ENCODE measurements at regions of chr12 and their contacts with region 1.

Region 1: GRCh38 chr12:8065991-8066594 is at the start of gene C3AR1:
- DNase-seq: peak; percentile 83
- H3K4me3 ChIP-seq: peak within 1 kb of the TSS in 1 of 3 experiments; percentile 38
- H3K27ac ChIP-seq: peak within 1 kb of the TSS; percentile 48
- H3K4me1 ChIP-seq: peaks cover 15% of the 10 kb centered on the region
- H3K27me3 ChIP-seq: no peaks in the 10 kb centered on the region
- CTCF ChIP-seq: no peak
- POLR2A ChIP-seq: no peak
- total RNA-seq, gene C3AR1: 0.21 and 0.22 TPM in 2 replicates

Region 2: GRCh38 chr12:8032242-8033152 is 33.6 kb before region 1 on chr12 and contains the start of gene FOXJ2:
- CTCF ChIA-PET with region 1: interaction called, 3 read pairs
- POLR2A ChIA-PET with region 1: no interaction called
- dilution Hi-C with region 1: no loop called
- intact Hi-C with region 1: loop called (anchors 2 kb)
- DNase-seq: peak; percentile 80
- H3K4me3 ChIP-seq: peak within 1 kb of the TSS; percentile 72 to 96 (median 82)
- H3K27ac ChIP-seq: peak within 1 kb of the TSS; percentile 90
- H3K4me1 ChIP-seq: peaks cover 33% of the 10 kb centered on the region
- H3K27me3 ChIP-seq: no peaks in the 10 kb centered on the region
- CTCF ChIP-seq: no peak
- POLR2A ChIP-seq: no peak
- total RNA-seq, gene FOXJ2: 13.3 and 13.9 TPM in 2 replicates

Region 3: GRCh38 chr12:8045952-8046944 is 19.8 kb before region 1 on chr12:
- CTCF ChIA-PET with region 1: interaction called, 13 read pairs
- POLR2A ChIA-PET with region 1: no interaction called
- dilution Hi-C with region 1: no loop called
- intact Hi-C with region 1: loop called (anchors 2 kb)
- DNase-seq: peak; percentile 81
- H3K4me3 ChIP-seq: no peak overlapping the region
- H3K27ac ChIP-seq: no peak overlapping the region
- H3K4me1 ChIP-seq: no peaks in the 10 kb centered on the region
- H3K27me3 ChIP-seq: no peaks in the 10 kb centered on the region
- CTCF ChIP-seq: peak; percentile 83 to 85
- POLR2A ChIP-seq: no peak

Region 4: DNA sequence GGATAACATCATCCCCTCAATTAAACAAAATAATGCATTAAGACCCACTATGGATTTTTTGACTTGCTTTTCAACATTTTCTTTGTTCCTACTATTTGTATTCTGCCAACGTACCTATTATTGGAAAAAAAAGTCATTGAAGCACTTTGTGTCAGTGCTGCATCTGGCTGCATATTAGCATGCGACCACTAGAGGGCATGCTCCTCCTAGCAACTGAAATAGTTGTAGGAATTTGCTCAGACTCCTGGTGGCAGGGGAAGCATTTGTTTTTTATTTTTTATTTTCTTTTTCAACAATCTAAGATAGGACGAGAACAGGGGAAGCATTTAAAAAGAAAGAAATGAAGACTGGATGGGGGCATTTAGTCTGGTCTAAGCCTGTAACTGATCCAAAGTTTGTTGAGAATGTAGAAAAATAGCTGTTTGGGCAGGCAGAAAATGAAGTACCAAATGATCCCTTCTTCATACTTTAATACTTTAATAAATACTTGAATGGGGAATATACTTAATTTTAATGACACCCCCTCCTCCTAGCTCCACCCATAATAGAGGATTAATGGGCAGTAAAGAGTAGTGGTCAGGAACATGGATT is 42.8 kb after region 1 on chr12:
- CTCF ChIA-PET with region 1: no interaction called
- POLR2A ChIA-PET with region 1: no interaction called
- dilution Hi-C with region 1: no loop called
- intact Hi-C with region 1: no loop called
- DNase-seq: peak; percentile 85
- H3K4me3 ChIP-seq: no peak overlapping the region
- H3K27ac ChIP-seq: no peak overlapping the region
- H3K4me1 ChIP-seq: no peaks in the 10 kb centered on the region
- H3K27me3 ChIP-seq: no peaks in the 10 kb centered on the region
- CTCF ChIP-seq: peak; percentile 80 to 94
- POLR2A ChIP-seq: no peak

Measured in endothelial cell of umbilical vein (primary cell).